ENCODE measurements at regions of chr6 and their contacts with region 1.

Region 1: GRCh38 chr6:133463789-133464188 is 222.6 kb downstream of the EYA4 start:
- DNase-seq: no peak
- H3K4me3 ChIP-seq: no peak overlapping the region
- H3K27ac ChIP-seq: no peak overlapping the region
- H3K4me1 ChIP-seq: no peaks in the 10 kb centered on the region
- H3K27me3 ChIP-seq: no peaks in the 10 kb centered on the region
- CTCF ChIP-seq: no peak
- POLR2A ChIP-seq: no peak

Region 2: GRCh38 chr6:133447924-133448323 is 15.9 kb before region 1 on chr6:
- CTCF ChIA-PET with region 1: interaction called, 11 read pairs
- POLR2A ChIA-PET with region 1: no interaction called
- dilution Hi-C with region 1: no loop called
- intact Hi-C with region 1: no loop called
- DNase-seq: no peak
- H3K4me3 ChIP-seq: no peak overlapping the region
- H3K27ac ChIP-seq: no peak overlapping the region
- H3K4me1 ChIP-seq: no peaks in the 10 kb centered on the region
- H3K27me3 ChIP-seq: no peaks in the 10 kb centered on the region
- CTCF ChIP-seq: no peak
- POLR2A ChIP-seq: no peak

Measured in endothelial cell of umbilical vein (primary cell).